Heart right ventricle (tissue), 16 donors: ENCODE measurements at regions of chr5 and their contacts with region 1.

Region 1: GRCh38 chr5:2207952-2208544 is 325.3 kb upstream of the IRX4 start:
- DNase-seq: peak in 1 of 2 donors; percentile 27
- ATAC-seq: peak in 5 of 8 donors; percentile 34 to 63 (median 42)
- H3K4me3 ChIP-seq: no peak overlapping the region
- H3K27ac ChIP-seq: no peak overlapping the region
- H3K4me1 ChIP-seq: no peaks in the 10 kb centered on the region
- H3K27me3 ChIP-seq: peaks cover 0 to 41% (median 23%) of the 10 kb centered on the region in 7 donors
- CTCF ChIP-seq: peak in 8 of 9 donors; percentile 4 to 57 (median 38)

Region 2: GRCh38 chr5:3602785-3603502 is 1394.9 kb after region 1 on chr5:
- intact Hi-C with region 1: loop called in 1 of 10 experiments (anchors 5 kb)
- DNase-seq: peak in 1 of 2 donors; percentile 52
- ATAC-seq: peak; percentile 62 to 81 (median 72)
- H3K4me3 ChIP-seq: peak overlapping the region in 5 of 10 donors; percentile 9 to 25 (median 15)
- H3K27ac ChIP-seq: no peak overlapping the region
- H3K4me1 ChIP-seq: peaks cover 0 to 32% (median 11%) of the 10 kb centered on the region in 9 donors
- H3K27me3 ChIP-seq: peaks cover 57 to 99% (median 98%) of the 10 kb centered on the region in 7 donors
- CTCF ChIP-seq: peak; percentile 23 to 73 (median 63)